Activated CD4-positive, alpha-beta T cell treated with anti-CD3 and anti-CD28 coated beads for 36 hours (primary cell): ENCODE measurements at regions of chr3 and their contacts with region 1.

Region 1: GRCh38 chr3:49802719-49803464 is at the start of gene INKA1:
- DNase-seq: peak; percentile 94
- ATAC-seq: peak; percentile 87
- H3K4me3 Mint-ChIP-seq: peak within 1 kb of the TSS; percentile 79
- H3K27ac Mint-ChIP-seq: peak within 1 kb of the TSS; percentile 55
- H3K4me1 Mint-ChIP-seq: peaks cover 40% of the 10 kb centered on the region
- H3K27me3 Mint-ChIP-seq: peaks cover 10% of the 10 kb centered on the region
- total RNA-seq, gene INKA1: 0.50 to 0.70 TPM

Region 2: DNA sequence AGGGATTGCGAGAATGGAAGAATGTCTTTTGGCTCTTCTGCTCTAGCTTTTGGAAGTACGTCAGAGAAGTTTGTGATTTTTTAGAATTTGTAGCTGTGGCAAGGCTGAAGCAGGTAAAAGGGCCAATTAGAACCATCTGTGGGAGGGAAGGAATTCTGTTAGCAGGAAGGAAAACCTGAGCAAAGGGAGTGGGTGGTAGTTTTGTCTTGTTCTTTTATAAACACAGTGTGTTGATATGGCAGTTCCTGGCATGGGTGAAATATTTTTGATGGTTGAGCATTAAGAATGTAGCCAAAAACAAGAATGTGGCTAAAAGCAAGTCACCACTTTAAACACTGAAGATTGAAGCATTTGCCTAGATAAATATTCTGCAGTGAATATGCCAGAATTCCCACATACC is 309.0 kb before region 1 on chr3:
- CTCF ChIA-PET with region 1: no interaction called
- POLR2A ChIA-PET with region 1: no interaction called
- intact Hi-C with region 1: no loop called
- DNase-seq: no peak
- ATAC-seq: no peak
- H3K4me3 Mint-ChIP-seq: no peak overlapping the region
- H3K27ac Mint-ChIP-seq: no peak overlapping the region
- H3K4me1 Mint-ChIP-seq: peaks cover 7% of the 10 kb centered on the region
- H3K27me3 Mint-ChIP-seq: no peaks in the 10 kb centered on the region

Region 3: DNA sequence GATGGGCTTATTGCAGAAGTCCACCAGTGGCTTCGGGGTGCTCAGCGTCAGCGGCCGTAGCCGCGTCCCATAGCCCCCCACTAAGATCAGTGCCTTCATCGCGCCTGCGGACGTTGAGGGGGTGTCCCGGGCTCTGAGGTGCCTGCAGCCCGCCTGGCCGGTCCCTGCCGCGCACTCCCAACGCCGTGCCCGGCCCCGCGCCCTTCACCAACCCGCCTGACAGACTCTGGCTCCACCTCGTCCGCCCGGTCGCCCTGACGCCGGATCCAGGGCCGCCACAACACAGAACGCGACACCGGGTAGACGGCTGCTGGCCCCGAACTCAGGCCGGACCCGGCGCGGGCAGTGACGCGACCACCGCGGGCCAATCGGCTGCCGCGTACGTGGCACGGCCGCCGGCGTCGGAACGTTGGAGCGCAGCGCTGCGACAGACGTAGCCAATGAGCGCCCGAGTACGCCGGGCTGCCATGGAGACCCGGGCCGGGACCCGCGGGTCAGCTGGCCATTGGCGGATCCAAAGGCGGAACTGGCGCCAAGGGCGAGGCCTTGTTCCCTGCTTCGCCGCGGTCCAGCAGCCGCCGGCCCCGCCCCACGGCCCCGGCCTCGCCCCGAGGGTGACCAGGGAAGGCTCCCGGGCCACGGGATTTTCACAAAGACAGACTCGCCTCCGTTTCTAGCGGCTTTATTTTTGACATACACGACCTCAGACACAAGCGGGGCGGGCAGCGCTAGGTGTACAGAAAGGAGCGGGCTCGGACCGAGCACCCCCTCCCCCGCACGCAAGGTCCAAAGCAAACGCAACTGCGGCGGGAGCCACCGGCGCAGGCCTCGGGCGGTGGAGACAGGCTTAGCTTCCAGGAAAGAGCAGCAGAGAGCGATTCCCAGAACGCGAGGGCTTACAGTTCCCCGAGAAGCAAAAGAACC is 79.0 kb before region 1 on chr3 and contains the start of gene GMPPB:
- CTCF ChIA-PET with region 1: interaction called, 4 read pairs
- POLR2A ChIA-PET with region 1: no interaction called
- intact Hi-C with region 1: loop called in 1 of 2 experiments (anchors 1 kb)
- DNase-seq: peak; percentile 97
- ATAC-seq: peak; percentile 87
- H3K4me3 Mint-ChIP-seq: peak within 1 kb of the TSS; percentile 92
- H3K27ac Mint-ChIP-seq: peak within 1 kb of the TSS; percentile 96
- H3K4me1 Mint-ChIP-seq: peaks cover 22% of the 10 kb centered on the region
- H3K27me3 Mint-ChIP-seq: no peaks in the 10 kb centered on the region
- total RNA-seq, gene GMPPB: 21.0 to 32.1 TPM

Region 4: GRCh38 chr3:49813497-49814174 is 10.7 kb after region 1 on chr3 and contains the start of gene UBA7:
- CTCF ChIA-PET with region 1: interaction called, 27 read pairs
- POLR2A ChIA-PET with region 1: interaction called, 16 read pairs
- intact Hi-C with region 1: loop called in 1 of 2 experiments (anchors 1 kb)
- DNase-seq: peak; percentile 62
- ATAC-seq: peak; percentile 92
- H3K4me3 Mint-ChIP-seq: peak within 1 kb of the TSS; percentile 89
- H3K27ac Mint-ChIP-seq: peak within 1 kb of the TSS; percentile 95
- H3K4me1 Mint-ChIP-seq: peaks cover 14% of the 10 kb centered on the region
- H3K27me3 Mint-ChIP-seq: no peaks in the 10 kb centered on the region
- total RNA-seq, gene UBA7: 85.5 to 85.7 TPM

Region 5: DNA sequence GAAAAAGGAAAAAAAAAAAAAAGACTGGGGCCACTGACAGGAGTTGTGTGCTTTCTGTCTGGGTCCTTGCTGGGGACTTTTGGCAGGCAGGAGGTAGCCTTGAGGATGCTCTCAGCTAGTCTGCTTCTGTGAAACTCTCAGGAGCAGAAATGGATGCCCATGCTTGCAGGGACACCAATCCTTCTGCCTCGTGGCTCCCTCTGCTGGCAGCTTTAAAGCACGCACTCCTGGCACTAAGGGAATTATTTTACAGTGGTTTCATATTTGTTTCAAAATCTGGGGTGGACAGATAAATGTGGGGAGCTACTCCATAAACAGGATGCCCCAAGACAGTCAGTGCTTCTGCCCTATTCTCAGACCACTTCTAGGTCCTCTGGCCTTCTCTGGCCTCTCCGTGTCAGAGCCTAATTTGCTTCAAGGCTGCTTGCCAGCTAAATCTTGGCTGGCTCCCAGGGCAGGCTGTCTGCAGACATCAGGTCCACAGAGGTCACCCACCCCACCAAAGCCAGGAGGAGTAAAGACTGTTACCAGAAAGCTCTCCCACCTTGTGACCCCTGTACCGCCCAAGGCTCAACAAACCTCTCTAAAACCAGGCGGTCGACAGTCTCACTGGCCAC is 36.4 kb after region 1 on chr3:
- CTCF ChIA-PET with region 1: interaction called, 56 read pairs
- POLR2A ChIA-PET with region 1: interaction called, 5 read pairs
- intact Hi-C with region 1: loop called (anchors 1 kb)
- DNase-seq: peak; percentile 89
- ATAC-seq: peak; percentile 95
- H3K4me3 Mint-ChIP-seq: no peak overlapping the region
- H3K27ac Mint-ChIP-seq: no peak overlapping the region
- H3K4me1 Mint-ChIP-seq: no peaks in the 10 kb centered on the region
- H3K27me3 Mint-ChIP-seq: no peaks in the 10 kb centered on the region

Region 6: DNA sequence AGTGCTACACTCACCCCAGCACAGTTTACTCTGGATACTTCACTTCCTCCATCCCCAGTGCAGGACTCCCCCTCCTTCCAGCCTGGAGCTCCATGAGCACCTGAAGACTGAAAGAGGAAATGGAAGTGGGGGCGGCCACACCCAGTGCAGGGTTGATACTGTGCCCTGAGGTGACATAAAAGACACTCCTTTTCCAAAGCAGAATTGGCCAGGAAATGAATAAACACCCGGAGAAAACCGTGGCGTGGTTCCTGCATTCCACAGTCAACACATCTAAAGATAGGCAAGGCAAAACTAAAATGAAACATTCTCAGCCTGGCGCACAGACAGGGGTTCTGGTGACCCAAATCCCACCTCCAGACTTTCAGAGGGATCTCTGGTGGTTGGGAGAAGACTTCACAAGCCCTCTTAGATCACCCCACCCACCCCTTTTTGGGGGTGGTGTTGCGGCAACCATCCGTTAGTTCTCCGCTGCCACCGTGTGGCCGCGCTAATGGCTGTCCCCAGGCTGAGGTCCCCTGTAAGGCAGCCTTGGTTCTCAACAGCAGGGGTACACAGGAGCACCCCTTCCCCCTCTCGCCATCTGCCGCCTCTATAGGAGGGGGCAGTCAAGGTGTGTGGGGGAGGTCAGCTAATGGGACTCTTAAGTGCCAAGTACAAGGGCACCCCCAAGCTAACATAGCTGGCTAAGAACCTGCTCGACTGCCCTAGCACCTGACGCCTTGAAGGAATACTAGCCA is 103.3 kb after region 1 on chr3:
- CTCF ChIA-PET with region 1: interaction called, 4 read pairs
- POLR2A ChIA-PET with region 1: no interaction called
- intact Hi-C with region 1: loop called (anchors 1 to 5 kb)
- DNase-seq: peak; percentile 77
- ATAC-seq: peak; percentile 45
- H3K4me3 Mint-ChIP-seq: peak overlapping the region; percentile 8
- H3K27ac Mint-ChIP-seq: peak overlapping the region; percentile 48
- H3K4me1 Mint-ChIP-seq: peaks cover 22% of the 10 kb centered on the region
- H3K27me3 Mint-ChIP-seq: no peaks in the 10 kb centered on the region

Region 7: GRCh38 chr3:50088725-50089608 is 286.1 kb after region 1 on chr3 and contains the start of gene RBM5:
- CTCF ChIA-PET with region 1: no interaction called
- POLR2A ChIA-PET with region 1: no interaction called
- intact Hi-C with region 1: loop called in 1 of 2 experiments (anchors 1 kb)
- DNase-seq: peak; percentile 97
- ATAC-seq: peak; percentile 100
- H3K4me3 Mint-ChIP-seq: peak within 1 kb of the TSS; percentile 99
- H3K27ac Mint-ChIP-seq: peak within 1 kb of the TSS; percentile 97
- H3K4me1 Mint-ChIP-seq: peaks cover 28% of the 10 kb centered on the region
- H3K27me3 Mint-ChIP-seq: no peaks in the 10 kb centered on the region
- total RNA-seq, gene RBM5: 118 to 131 TPM

Region 8: DNA sequence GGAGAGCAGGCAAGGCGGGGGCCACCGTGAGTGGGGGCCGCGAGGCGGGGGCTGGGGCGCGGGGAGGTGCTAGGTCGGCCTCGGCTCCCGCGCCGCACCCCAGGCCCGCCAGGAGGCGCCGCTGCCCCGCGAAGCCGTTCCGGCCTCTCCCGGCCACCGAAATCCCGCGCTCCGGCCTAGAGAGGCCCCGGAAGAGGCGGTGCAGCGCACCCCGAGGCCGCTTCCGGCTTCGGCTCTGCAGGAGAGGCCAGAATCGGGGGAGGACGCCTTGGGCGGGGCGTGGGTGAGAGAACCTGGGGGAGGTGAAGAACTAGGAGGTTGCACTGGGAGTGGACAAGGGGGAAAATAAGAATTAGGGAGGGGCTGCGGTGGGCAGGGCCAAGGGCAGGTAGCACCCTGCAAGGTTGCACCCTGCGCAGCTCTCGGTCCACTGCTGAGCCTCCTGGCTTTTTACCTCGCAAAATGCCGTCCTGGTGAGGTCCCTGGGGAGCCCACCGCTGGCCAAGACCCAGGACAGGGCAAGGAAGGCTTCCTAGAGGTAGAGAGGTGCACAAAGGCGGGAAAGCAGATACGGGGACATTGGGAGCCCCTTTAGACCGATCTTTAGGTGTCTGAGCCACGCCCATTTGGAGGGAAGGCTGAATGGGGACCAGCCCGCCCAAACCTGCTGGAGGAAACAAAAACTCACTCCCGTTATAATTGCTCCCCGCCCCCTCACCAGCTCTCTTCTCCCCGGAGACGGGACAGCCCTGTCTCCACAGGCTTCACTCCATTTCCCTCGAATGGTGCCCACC is 424.7 kb after region 1 on chr3:
- CTCF ChIA-PET with region 1: no interaction called
- POLR2A ChIA-PET with region 1: no interaction called
- intact Hi-C with region 1: loop called in 1 of 2 experiments (anchors 2 kb)
- DNase-seq: peak; percentile 95
- ATAC-seq: peak; percentile 83
- H3K4me3 Mint-ChIP-seq: peak overlapping the region; percentile 79
- H3K27ac Mint-ChIP-seq: peak overlapping the region; percentile 88
- H3K4me1 Mint-ChIP-seq: peaks cover 22% of the 10 kb centered on the region
- H3K27me3 Mint-ChIP-seq: no peaks in the 10 kb centered on the region